Left colon (tissue), 2 donors: ENCODE measurements at regions of chr2 and their contacts with region 1.

Region 1: GRCh38 chr2:226984750-226985582 is 149.1 kb downstream of the RHBDD1 start:
- DNase-seq: peak in 1 of 2 donors; percentile 21
- ATAC-seq: peak; percentile 66

Region 2: DNA sequence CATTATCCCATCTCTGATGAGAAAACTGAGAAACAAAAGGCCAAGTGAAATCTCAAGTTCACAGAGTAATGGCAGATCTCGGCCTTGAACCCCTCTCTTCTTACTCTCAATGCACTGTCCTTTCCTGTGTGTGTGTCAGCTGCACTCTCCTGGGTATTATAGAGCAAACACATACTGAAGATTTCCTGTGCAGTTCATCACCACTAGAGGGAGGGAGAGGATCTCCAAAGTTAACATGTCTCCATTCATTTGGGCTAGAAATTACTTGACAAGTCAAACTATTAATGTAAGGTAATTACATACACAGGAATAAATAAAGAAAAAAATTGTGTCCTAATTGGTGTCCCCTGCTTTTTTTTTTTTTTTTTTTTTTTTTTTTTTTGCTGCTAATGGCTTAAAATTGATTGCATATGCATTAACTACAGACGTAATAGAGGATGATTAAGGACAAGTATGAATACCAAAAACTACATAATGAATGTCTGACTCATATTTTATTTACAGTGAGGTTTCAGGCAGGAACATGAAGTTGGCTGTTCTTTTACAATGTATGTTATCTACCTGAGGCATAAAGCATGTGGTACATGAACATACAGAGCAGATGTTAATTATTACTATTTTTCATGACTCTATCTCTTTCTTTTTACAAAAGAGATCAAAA is 1316.2 kb before region 1 on chr2:
- intact Hi-C with region 1: loop called in 1 of 2 experiments (anchors 5 kb)
- DNase-seq: no peak
- ATAC-seq: peak; percentile 67

Region 3: GRCh38 chr2:226835796-226836547 is 149.0 kb before region 1 on chr2 and contains the start of gene RHBDD1:
- intact Hi-C with region 1: loop called in 1 of 2 experiments (anchors 10 kb)
- DNase-seq: peak; percentile 93 to 96
- ATAC-seq: peak; percentile 97
- total RNA-seq, gene RHBDD1: 26.1 to 27.4 TPM